ENCODE measurements at regions of chr5 and their contacts with region 1.

Region 1: DNA sequence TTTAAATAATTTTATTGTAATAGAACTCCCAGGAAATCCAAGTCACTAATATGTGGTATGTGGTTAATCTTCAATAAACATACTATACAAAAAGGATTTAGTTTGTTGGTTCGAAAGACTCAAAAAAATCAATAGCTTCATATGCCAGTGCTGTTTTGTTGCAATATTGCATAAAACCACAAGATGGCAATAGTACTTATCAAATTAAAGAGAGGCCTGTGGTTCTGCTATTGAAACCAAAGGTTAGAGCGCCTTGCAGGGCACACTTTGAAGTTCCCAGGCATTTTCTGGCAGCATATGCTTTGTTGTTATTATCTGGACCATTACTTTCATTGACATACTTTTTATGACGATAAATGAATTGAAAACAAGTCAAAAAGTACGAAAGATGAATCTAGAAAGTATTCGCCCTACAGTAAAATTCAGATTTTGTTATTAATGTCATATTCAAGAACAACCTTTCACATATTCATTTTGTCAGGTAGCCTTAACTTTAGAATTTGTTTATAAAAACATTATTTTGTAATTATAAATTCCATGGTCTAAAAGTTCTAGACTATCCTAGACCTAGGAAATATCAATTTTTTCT is 316.3 kb downstream of the MCTP1 start:
- DNase-seq: peak; percentile 19
- ATAC-seq: peak; percentile 68
- H3K4me3 Mint-ChIP-seq: no peak overlapping the region
- H3K27ac Mint-ChIP-seq: no peak overlapping the region
- H3K4me1 Mint-ChIP-seq: no peaks in the 10 kb centered on the region
- H3K27me3 Mint-ChIP-seq: no peaks in the 10 kb centered on the region

Region 2: DNA sequence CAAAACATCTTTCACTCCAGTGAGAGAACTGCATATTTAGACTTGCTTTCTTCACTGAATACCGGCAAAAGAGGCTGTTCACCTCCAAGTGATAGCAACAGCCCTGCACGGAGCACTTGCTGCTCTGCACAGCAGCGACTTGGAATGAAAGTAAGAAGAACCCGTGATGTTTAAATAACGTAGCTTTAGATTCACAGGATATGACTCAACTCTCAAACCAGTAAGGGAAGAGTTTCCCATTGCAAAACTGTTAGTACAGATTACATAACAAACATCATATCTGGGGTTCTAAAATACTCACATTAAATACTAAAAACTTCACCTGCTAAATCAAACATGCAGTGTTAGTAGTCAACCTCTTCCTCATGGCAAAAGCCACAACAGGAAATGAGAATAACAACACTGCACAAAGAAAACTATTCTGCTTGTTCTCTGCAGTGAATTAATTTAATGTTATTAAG is 112.9 kb after region 1 on chr5:
- CTCF ChIA-PET with region 1: no interaction called
- POLR2A ChIA-PET with region 1: no interaction called
- intact Hi-C with region 1: loop called in 1 of 2 experiments (anchors 10 kb)
- DNase-seq: peak; percentile 56
- ATAC-seq: peak; percentile 99
- H3K4me3 Mint-ChIP-seq: peak overlapping the region; percentile 30
- H3K27ac Mint-ChIP-seq: no peak overlapping the region
- H3K4me1 Mint-ChIP-seq: peaks cover 13% of the 10 kb centered on the region
- H3K27me3 Mint-ChIP-seq: peaks cover 7% of the 10 kb centered on the region

Region 3: GRCh38 chr5:95102080-95102479 is 133.5 kb after region 1 on chr5:
- CTCF ChIA-PET with region 1: no interaction called
- POLR2A ChIA-PET with region 1: no interaction called
- intact Hi-C with region 1: no loop called
- DNase-seq: no peak
- ATAC-seq: no peak
- H3K4me3 Mint-ChIP-seq: no peak overlapping the region
- H3K27ac Mint-ChIP-seq: no peak overlapping the region
- H3K4me1 Mint-ChIP-seq: no peaks in the 10 kb centered on the region
- H3K27me3 Mint-ChIP-seq: peaks cover 2% of the 10 kb centered on the region

Region 4: DNA sequence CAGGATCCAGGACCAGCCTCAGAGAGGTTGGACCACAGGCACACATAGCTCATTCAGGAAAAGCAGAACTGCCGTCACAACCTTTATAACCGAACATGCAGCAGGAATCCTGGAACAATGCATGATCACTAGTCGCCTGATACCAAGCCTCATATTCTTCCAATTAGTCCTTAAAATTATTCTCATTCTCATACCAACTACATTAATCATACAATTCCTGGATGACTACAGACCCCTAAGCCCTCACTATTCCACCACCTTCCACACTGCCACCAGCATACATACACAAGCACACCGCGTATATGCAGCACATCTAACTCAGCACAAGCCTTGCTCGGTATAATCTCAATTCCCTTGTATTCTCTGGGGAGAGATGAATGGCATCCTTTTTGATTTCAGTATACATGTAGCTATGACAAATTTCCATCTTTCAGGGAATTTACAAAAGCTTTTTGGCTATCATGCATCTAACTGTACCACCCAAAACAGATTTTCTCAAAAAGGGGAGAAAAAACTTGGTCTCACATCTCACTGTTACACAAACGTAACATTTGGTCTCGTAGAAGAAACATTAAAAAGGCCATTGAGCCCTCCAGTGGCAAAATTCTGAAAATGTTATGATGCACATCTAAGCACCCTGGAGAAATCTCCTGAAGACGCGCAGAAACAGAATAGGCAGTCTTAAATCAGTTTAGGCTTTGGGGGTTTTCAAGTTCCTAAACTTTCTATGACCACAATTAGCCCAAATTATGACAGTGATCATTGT is 270.1 kb after region 1 on chr5:
- CTCF ChIA-PET with region 1: no interaction called
- POLR2A ChIA-PET with region 1: no interaction called
- intact Hi-C with region 1: loop called in 1 of 2 experiments (anchors 2 kb)
- DNase-seq: no peak
- ATAC-seq: no peak
- H3K4me3 Mint-ChIP-seq: no peak overlapping the region
- H3K27ac Mint-ChIP-seq: no peak overlapping the region
- H3K4me1 Mint-ChIP-seq: peaks cover 7% of the 10 kb centered on the region
- H3K27me3 Mint-ChIP-seq: peaks cover 15% of the 10 kb centered on the region

Region 5: GRCh38 chr5:95261437-95262175 is 293.0 kb after region 1 on chr5:
- CTCF ChIA-PET with region 1: interaction called, 4 read pairs
- POLR2A ChIA-PET with region 1: no interaction called
- intact Hi-C with region 1: loop called (anchors 1 kb)
- DNase-seq: peak; percentile 39
- ATAC-seq: no peak
- H3K4me3 Mint-ChIP-seq: no peak overlapping the region
- H3K27ac Mint-ChIP-seq: no peak overlapping the region
- H3K4me1 Mint-ChIP-seq: no peaks in the 10 kb centered on the region
- H3K27me3 Mint-ChIP-seq: peaks cover 5% of the 10 kb centered on the region

Measured in activated CD4-positive, alpha-beta T cell treated with anti-CD3 and anti-CD28 coated beads for 36 hours (primary cell).